Caco-2 (cell line): ENCODE measurements at regions of chr2 and their contacts with region 1.

Region 1: DNA sequence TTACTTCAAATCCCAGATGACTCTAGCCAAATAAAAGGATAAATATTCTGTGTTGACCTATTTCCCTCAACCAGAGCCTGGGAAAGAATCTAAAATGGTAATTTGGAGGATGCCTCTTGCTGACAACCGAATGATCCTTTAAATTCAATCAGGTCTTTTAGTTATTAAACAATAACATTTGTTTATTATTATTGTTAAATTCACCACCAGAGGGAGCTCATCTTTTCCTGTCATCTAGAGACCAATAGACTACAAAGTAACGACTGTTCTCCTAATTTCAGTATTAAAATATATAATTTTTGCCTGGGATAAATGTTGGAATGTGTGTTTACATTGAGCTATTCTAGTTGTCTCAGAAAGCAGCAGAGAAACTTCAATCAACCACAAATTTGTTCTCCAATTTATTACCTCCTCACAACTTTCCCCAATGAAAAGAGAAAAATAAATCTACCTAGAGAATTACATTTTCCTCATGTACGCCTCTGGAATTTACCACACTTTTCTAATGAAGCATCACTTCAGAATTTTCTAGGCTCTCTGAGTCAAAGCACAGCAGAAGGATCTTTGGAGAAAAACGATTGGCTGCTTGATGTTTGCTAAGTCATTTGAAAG is 142.7 kb downstream of the SCG2 start:
- DNase-seq: no peak
- H3K4me3 ChIP-seq: no peak overlapping the region
- H3K4me3 Mint-ChIP-seq: no peak overlapping the region
- H3K27ac Mint-ChIP-seq: no peak overlapping the region
- H3K4me1 ChIP-seq: no peaks in the 10 kb centered on the region
- H3K4me1 Mint-ChIP-seq: no peaks in the 10 kb centered on the region
- H3K27me3 ChIP-seq: no peaks in the 10 kb centered on the region
- H3K27me3 Mint-ChIP-seq: no peaks in the 10 kb centered on the region
- CTCF ChIP-seq: peak; percentile 26 to 66

Region 2: GRCh38 chr2:223338016-223338415 is 121.4 kb before region 1 on chr2:
- CTCF ChIA-PET with region 1: no interaction called
- POLR2A ChIA-PET with region 1: no interaction called
- intact Hi-C with region 1: no loop called
- DNase-seq: no peak
- H3K4me3 ChIP-seq: no peak overlapping the region
- H3K4me3 Mint-ChIP-seq: no peak overlapping the region
- H3K27ac Mint-ChIP-seq: no peak overlapping the region
- H3K4me1 ChIP-seq: no peaks in the 10 kb centered on the region
- H3K4me1 Mint-ChIP-seq: no peaks in the 10 kb centered on the region
- H3K27me3 ChIP-seq: no peaks in the 10 kb centered on the region
- H3K27me3 Mint-ChIP-seq: peaks cover 15% of the 10 kb centered on the region
- CTCF ChIP-seq: no peak

Region 3: DNA sequence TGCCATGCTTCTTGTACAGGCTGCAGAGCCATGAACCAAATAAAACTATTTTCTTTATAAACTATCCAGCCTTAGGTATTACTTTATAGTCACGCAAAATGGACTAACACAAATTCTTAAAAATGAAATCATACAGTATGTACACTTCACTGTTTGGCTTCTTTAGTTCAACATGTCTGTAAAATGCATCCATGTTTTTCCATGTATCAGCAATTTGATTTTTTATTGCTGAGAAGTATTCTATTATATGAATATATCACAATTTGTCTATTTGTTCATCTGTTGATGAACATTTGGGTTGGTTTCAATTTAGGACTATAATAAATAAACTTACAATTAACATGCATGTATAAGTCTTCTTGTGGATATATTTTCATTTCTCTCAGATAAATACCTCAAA is 39.4 kb before region 1 on chr2:
- CTCF ChIA-PET with region 1: no interaction called
- POLR2A ChIA-PET with region 1: no interaction called
- intact Hi-C with region 1: no loop called
- DNase-seq: no peak
- H3K4me3 ChIP-seq: no peak overlapping the region
- H3K4me3 Mint-ChIP-seq: no peak overlapping the region
- H3K27ac Mint-ChIP-seq: no peak overlapping the region
- H3K4me1 ChIP-seq: no peaks in the 10 kb centered on the region
- H3K4me1 Mint-ChIP-seq: no peaks in the 10 kb centered on the region
- H3K27me3 ChIP-seq: no peaks in the 10 kb centered on the region
- H3K27me3 Mint-ChIP-seq: peaks cover 16% of the 10 kb centered on the region
- CTCF ChIP-seq: no peak

Region 4: GRCh38 chr2:223601932-223602666 is 142.7 kb after region 1 on chr2 and contains the start of gene SCG2:
- CTCF ChIA-PET with region 1: interaction called, 3 read pairs
- POLR2A ChIA-PET with region 1: no interaction called
- intact Hi-C with region 1: loop called (anchors 5 kb)
- DNase-seq: peak; percentile 69 to 77
- H3K4me3 ChIP-seq: no peak within 1 kb of the TSS
- H3K4me3 Mint-ChIP-seq: no peak within 1 kb of the TSS
- H3K27ac Mint-ChIP-seq: no peak within 1 kb of the TSS
- H3K4me1 ChIP-seq: no peaks in the 10 kb centered on the region
- H3K4me1 Mint-ChIP-seq: no peaks in the 10 kb centered on the region
- H3K27me3 ChIP-seq: no peaks in the 10 kb centered on the region
- H3K27me3 Mint-ChIP-seq: peaks cover 26% of the 10 kb centered on the region
- CTCF ChIP-seq: peak; percentile 38 to 42
- total RNA-seq, gene SCG2: 0.35 and 0.41 TPM in 2 replicates

Region 5: GRCh38 chr2:223618172-223619035 is 159.0 kb after region 1 on chr2:
- CTCF ChIA-PET with region 1: interaction called, 3 read pairs
- POLR2A ChIA-PET with region 1: no interaction called
- intact Hi-C with region 1: loop called (anchors 1 kb)
- DNase-seq: peak in 1 of 2 experiments; percentile 24
- H3K4me3 ChIP-seq: no peak overlapping the region
- H3K4me3 Mint-ChIP-seq: no peak overlapping the region
- H3K27ac Mint-ChIP-seq: no peak overlapping the region
- H3K4me1 ChIP-seq: peaks cover 14% of the 10 kb centered on the region
- H3K4me1 Mint-ChIP-seq: peaks cover 11% of the 10 kb centered on the region
- H3K27me3 ChIP-seq: no peaks in the 10 kb centered on the region
- H3K27me3 Mint-ChIP-seq: peaks cover 12% of the 10 kb centered on the region
- CTCF ChIP-seq: peak in 1 of 2 experiments; percentile 32